HepG2 (cell line): ENCODE measurements at regions of chr7 and their contacts with region 1.

Region 1: GRCh38 chr7:954330-955238 is at the start of gene ADAP1:
- DNase-seq: no peak
- ATAC-seq: peak; percentile 7; the same call in 2 of the 3 replicates
- H3K4me3 ChIP-seq: peak within 1 kb of the TSS; percentile 59 to 81 (median 76)
- H3K27ac ChIP-seq: no peak within 1 kb of the TSS
- H3K4me1 ChIP-seq: peaks cover 60% of the 10 kb centered on the region
- H3K27me3 ChIP-seq: no peaks in the 10 kb centered on the region
- CTCF ChIP-seq: peak; percentile 43; the same call in 1 of the 2 replicates
- EP300 ChIP-seq: no peak
- POLR2A ChIP-seq: no peak
- RAD21 ChIP-seq: peak; percentile 89
- total RNA-seq, gene ADAP1: 18.3 and 24.6 TPM in 2 replicates

Region 2: DNA sequence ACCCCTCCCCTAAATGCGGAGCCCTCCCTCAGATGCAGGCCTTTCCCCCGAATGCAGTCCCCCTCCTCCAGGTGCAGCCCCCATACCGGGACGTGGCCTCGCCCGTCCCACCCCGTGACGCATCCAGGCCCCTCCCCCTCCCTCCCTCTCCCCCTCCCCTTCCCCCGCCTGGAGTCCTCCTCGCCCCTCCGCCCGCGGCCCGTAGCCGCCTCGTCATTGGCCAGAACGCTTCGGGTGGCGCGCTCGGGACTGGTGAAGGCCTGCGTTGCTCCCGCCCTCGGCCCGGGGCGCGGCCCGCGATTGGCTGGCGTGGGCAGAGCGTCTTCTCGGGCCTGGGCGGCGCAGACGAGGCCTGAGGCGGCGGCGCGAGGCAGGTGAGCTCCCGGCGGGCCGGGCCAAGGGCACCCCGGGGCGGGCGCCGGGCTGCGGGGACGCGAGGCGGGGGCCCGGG is 138.3 kb before region 1 on chr7:
- CTCF ChIA-PET with region 1: no interaction called
- POLR2A ChIA-PET with region 1: interaction called, 3 read pairs
- in situ Hi-C with region 1: no loop called
- intact Hi-C with region 1: loop called (anchors 10 kb)
- DNase-seq: peak; percentile 93
- ATAC-seq: peak; percentile 85
- H3K4me3 ChIP-seq: peak overlapping the region; percentile 53 to 93 (median 90); a peak in 4 of 6 replicates
- H3K27ac ChIP-seq: no peak overlapping the region
- H3K4me1 ChIP-seq: peaks cover 81% of the 10 kb centered on the region
- H3K27me3 ChIP-seq: no peaks in the 10 kb centered on the region; a peak in 1 of 5 replicates
- CTCF ChIP-seq: no peak
- EP300 ChIP-seq: no peak
- POLR2A ChIP-seq: peak; percentile 38 to 73; a peak in 3 of 4 replicates
- RAD21 ChIP-seq: no peak

Region 3: GRCh38 chr7:876167-876967 is 78.2 kb before region 1 on chr7 and contains the start of gene GET4:
- CTCF ChIA-PET with region 1: no interaction called
- POLR2A ChIA-PET with region 1: interaction called, 3 read pairs
- in situ Hi-C with region 1: no loop called
- intact Hi-C with region 1: loop called (anchors 5 kb)
- DNase-seq: peak; percentile 65
- ATAC-seq: peak; percentile 88
- H3K4me3 ChIP-seq: peak within 1 kb of the TSS; percentile 73 to 98 (median 86)
- H3K27ac ChIP-seq: peak within 1 kb of the TSS; percentile 83
- H3K4me1 ChIP-seq: peaks cover 41% of the 10 kb centered on the region
- H3K27me3 ChIP-seq: no peaks in the 10 kb centered on the region
- CTCF ChIP-seq: no peak; the same call in 1 of the 2 replicates
- EP300 ChIP-seq: 0 out of 4 replicates have a peak, but pooled peaks of 1 of the 2 experiments have one; percentile 16
- POLR2A ChIP-seq: peak; percentile 58 to 67
- RAD21 ChIP-seq: peak; percentile 53
- total RNA-seq, gene GET4: 28.2 and 31.6 TPM in 2 replicates

Region 4: GRCh38 chr7:901381-902154 is 53.0 kb before region 1 on chr7:
- CTCF ChIA-PET with region 1: no interaction called
- POLR2A ChIA-PET with region 1: interaction called, 24 read pairs
- in situ Hi-C with region 1: no loop called
- intact Hi-C with region 1: loop called (anchors 10 kb)
- DNase-seq: peak; percentile 85
- ATAC-seq: peak; percentile 80
- H3K4me3 ChIP-seq: peak overlapping the region in 1 of 3 experiments; percentile 43; a peak in 1 of 6 replicates
- H3K27ac ChIP-seq: peak overlapping the region; percentile 70
- H3K4me1 ChIP-seq: peaks cover 16% of the 10 kb centered on the region
- H3K27me3 ChIP-seq: no peaks in the 10 kb centered on the region
- CTCF ChIP-seq: no peak
- EP300 ChIP-seq: 0 out of 4 replicates have a peak, but pooled peaks of 1 of the 2 experiments have one; percentile 36
- POLR2A ChIP-seq: no peak
- RAD21 ChIP-seq: no peak

Region 5: GRCh38 chr7:924541-925261 is 29.9 kb before region 1 on chr7:
- CTCF ChIA-PET with region 1: no interaction called
- POLR2A ChIA-PET with region 1: interaction called, 24 read pairs
- in situ Hi-C with region 1: no loop called
- intact Hi-C with region 1: no loop called
- DNase-seq: no peak
- ATAC-seq: no peak
- H3K4me3 ChIP-seq: no peak overlapping the region
- H3K27ac ChIP-seq: no peak overlapping the region
- H3K4me1 ChIP-seq: peaks cover 61% of the 10 kb centered on the region
- H3K27me3 ChIP-seq: no peaks in the 10 kb centered on the region
- CTCF ChIP-seq: no peak
- EP300 ChIP-seq: no peak
- POLR2A ChIP-seq: no peak
- RAD21 ChIP-seq: no peak

Region 6: DNA sequence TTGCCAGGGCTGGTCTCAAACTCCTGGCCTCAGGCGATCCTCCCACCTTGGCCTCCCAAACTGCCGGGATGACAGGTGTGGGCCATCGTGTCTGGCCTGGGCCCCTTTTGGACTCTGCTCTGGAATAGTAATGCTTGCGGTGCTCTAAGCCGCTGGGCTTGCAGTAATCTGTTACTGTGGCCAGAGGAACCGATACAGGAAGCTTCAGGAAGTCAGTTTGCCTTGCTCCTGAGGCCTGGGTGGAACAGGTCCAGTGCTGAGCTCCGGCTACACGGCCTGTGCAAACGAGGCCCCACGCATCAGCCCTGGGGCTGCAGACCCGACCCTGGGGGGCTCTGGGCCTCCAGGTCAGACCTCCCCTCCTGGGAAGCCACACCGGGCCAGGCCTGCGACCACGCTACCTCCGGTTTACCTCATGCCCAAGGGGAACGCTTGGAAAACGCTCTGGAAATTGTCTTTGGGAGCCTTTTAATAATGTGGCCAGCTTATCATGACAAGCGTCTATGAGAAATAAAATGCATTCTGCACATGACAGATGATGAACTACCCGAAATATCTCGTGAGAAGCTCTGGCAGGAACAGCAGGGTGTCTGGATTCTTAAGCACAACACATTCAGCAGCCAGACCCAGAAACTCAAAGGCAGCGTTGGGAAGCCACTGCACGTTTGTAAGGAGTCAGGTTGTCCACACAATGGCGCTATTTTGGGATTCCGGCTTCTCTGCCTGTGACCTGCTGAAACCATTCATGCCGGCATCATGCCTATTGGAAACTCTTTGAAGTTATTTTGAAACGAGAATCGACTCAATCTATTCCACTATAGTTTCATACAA is 10.0 kb after region 1 on chr7:
- CTCF ChIA-PET with region 1: no interaction called
- POLR2A ChIA-PET with region 1: interaction called, 18 read pairs
- in situ Hi-C with region 1: no loop called
- intact Hi-C with region 1: no loop called
- DNase-seq: peak; percentile 64
- ATAC-seq: peak; percentile 48
- H3K4me3 ChIP-seq: peak overlapping the region in 1 of 3 experiments; percentile 72; a peak in 2 of 6 replicates
- H3K27ac ChIP-seq: peak overlapping the region; percentile 59
- H3K4me1 ChIP-seq: peaks cover 55% of the 10 kb centered on the region
- H3K27me3 ChIP-seq: no peaks in the 10 kb centered on the region
- CTCF ChIP-seq: peak; percentile 58
- EP300 ChIP-seq: no peak
- POLR2A ChIP-seq: peak in 1 of 2 experiments; percentile 64; a peak in 2 of 4 replicates
- RAD21 ChIP-seq: no peak

Region 7: DNA sequence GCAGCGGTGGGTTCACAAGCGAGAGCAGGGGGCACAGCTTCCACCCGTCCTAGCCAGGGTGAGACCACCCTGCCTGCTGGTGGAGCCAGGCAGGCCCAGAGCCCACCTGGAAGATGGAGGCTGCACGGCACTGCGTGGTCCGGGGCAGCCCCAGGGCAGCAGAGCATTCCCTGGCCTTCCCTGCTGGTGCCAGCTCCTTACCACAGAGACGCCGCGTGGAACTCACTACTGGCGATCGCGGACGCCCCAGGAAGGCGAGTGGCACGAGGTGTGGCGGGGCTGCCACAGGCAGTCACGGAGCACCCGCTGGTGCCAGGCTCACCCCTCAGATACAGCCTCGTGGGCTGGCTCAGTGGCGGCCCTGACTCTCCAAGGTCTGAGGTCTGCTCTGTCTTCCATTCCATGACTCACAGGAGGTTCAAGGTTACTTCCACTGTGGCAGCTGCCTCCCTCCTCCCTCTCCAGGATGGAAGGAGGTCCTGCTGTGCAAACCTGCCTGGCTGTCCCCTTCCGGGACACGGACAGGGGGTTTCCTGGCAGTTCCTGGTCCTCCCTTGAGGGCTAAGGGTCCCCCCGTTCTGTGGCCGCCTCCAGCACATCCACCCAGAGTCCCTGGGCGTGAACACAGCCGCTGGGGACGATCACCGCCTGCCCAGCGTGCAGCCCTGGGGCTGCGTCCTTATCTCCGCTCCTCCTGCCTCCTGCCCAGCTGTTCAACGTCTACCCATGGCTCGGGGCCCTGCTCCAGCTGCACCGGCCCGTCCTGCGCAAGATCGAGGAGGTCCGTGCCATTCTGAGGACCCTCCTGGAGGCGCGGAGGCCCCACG is 31.5 kb after region 1 on chr7:
- CTCF ChIA-PET with region 1: no interaction called
- POLR2A ChIA-PET with region 1: interaction called, 25 read pairs
- in situ Hi-C with region 1: no loop called
- intact Hi-C with region 1: no loop called
- DNase-seq: no peak
- ATAC-seq: peak; percentile 11; the same call in 2 of the 3 replicates
- H3K4me3 ChIP-seq: no peak overlapping the region
- H3K27ac ChIP-seq: no peak overlapping the region
- H3K4me1 ChIP-seq: peaks cover 59% of the 10 kb centered on the region
- H3K27me3 ChIP-seq: no peaks in the 10 kb centered on the region
- CTCF ChIP-seq: no peak
- EP300 ChIP-seq: no peak
- POLR2A ChIP-seq: no peak
- RAD21 ChIP-seq: no peak